Common myeloid progenitor, CD34-positive (primary cell): ENCODE measurements at regions of chr9 and their contacts with region 1.

Region 1: DNA sequence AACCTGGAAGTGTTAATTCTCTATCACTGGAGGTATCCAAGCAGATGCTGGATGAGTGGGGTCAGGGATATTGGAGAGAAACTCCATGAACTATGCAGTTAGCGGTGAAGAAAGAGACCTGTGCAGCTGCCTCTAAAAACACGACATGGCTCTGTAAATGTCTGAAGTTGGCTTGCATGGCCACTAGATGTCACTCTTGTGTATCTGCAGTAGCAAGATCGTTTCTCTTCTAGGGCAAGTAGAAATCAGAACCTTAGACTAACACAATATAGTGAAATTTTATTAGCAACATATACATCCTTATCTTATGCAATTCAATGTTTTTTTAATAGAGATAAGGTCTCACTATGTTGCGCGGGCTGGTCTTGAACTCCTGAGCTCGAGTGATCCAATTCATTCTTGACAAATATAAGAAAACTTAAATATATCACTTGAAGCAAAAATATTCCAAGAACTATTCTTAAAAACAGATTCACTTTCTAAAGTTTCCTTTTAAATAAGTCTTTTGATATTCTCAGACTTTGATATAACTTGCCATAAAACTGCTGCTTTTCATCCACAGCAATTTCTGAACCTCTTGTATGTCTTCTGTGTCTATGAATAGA is 2.9 kb downstream of the OR2S2 start:
- DNase-seq: peak; percentile 75 to 89 (median 86)
- H3K4me3 ChIP-seq: no peak overlapping the region
- H3K27ac ChIP-seq: no peak overlapping the region
- H3K4me1 ChIP-seq: no peaks in the 10 kb centered on the region
- H3K27me3 ChIP-seq: peaks cover 0 to 9% (median 0%) of the 10 kb centered on the region in 5 experiments

Region 2: GRCh38 chr9:35891646-35892045 is 63.4 kb before region 1 on chr9:
- CTCF ChIA-PET with region 1: interaction called, 10 read pairs
- POLR2A ChIA-PET with region 1: no interaction called
- DNase-seq: peak in 2 of 3 donors; percentile 25 to 26
- H3K4me3 ChIP-seq: no peak overlapping the region
- H3K27ac ChIP-seq: no peak overlapping the region
- H3K4me1 ChIP-seq: peaks cover 0 to 8% (median 0%) of the 10 kb centered on the region in 4 experiments
- H3K27me3 ChIP-seq: peaks cover 0 to 10% (median 3%) of the 10 kb centered on the region in 5 experiments

Region 3: GRCh38 chr9:36166101-36166927 is 211.3 kb after region 1 on chr9:
- CTCF ChIA-PET with region 1: no interaction called
- POLR2A ChIA-PET with region 1: no interaction called
- DNase-seq: peak; percentile 88 to 93 (median 93)
- H3K4me3 ChIP-seq: peak overlapping the region in 6 of 7 experiments; percentile 27 to 72 (median 55)
- H3K27ac ChIP-seq: no peak overlapping the region
- H3K4me1 ChIP-seq: peaks cover 0 to 26% (median 10%) of the 10 kb centered on the region in 4 experiments
- H3K27me3 ChIP-seq: peaks cover 0 to 3% (median 0%) of the 10 kb centered on the region in 5 experiments